HAP-1 (cell line): ENCODE measurements at regions of chr5 and their contacts with region 1.

Region 1: DNA sequence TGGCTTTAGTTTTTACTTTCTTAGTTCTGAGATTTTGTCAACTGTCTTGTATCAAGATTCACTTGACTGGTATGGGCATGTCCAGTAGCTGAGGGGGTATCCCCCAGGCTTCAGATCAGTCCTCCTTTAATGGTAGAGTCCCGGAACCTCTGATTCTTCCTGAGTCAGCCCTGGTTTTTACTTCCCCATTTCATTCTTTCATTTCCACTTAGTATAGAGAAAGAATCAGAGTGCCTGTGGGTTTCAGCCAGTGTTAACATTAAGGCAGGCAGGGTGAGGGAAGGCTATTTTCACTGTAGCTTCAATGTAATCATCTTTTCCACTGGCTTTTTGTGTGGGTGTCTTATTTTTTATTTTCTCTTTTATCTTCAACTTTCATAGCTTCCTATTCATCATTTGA is 8.3 kb upstream of the COMMD10 start:
- DNase-seq: no peak
- H3K4me3 ChIP-seq: no peak overlapping the region
- H3K4me1 ChIP-seq: peaks cover 9% of the 10 kb centered on the region
- H3K27me3 ChIP-seq: no peaks in the 10 kb centered on the region

Region 2: GRCh38 chr5:115625579-115626444 is 450.7 kb before region 1 on chr5 and contains the start of gene TMED7:
- in situ Hi-C with region 1: loop called (anchors 10 kb)
- DNase-seq: peak; percentile 95 to 100
- H3K4me3 ChIP-seq: peak within 1 kb of the TSS; percentile 78
- H3K4me1 ChIP-seq: peaks cover 19% of the 10 kb centered on the region
- H3K27me3 ChIP-seq: no peaks in the 10 kb centered on the region

Region 3: DNA sequence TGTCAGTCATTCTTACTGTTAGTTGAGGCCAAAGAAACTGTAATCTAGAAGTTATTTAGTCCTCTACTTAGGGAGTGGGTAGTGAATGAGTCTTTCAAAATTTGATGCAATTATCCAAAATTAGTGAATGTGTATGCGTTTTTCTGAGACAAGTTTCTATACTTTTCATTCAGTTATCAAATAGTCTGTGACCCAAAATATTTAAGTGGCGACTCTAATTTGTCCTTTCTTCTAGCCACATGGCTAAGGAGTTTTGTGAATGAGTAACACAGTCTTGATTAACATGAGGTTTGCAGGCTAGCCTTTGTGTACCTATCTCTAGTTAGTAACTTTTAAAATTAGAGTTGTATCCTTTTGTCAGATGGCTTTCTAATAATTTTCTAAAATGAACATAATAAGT is 54.0 kb after region 1 on chr5:
- in situ Hi-C with region 1: no loop called
- DNase-seq: no peak
- H3K4me3 ChIP-seq: no peak overlapping the region
- H3K4me1 ChIP-seq: no peaks in the 10 kb centered on the region
- H3K27me3 ChIP-seq: no peaks in the 10 kb centered on the region